Lower leg skin (tissue), 4 donors: ENCODE measurements at regions of chr1 and their contacts with region 1.

Region 1: GRCh38 chr1:84573967-84574842 is at the start of gene CTBS:
- DNase-seq: peak; percentile 72 to 96
- H3K4me3 ChIP-seq: peak within 1 kb of the TSS; percentile 77
- CTCF ChIP-seq: no peak
- POLR2A ChIP-seq: no peak
- total RNA-seq, gene CTBS: 15.1 to 16.9 (median 15.5) TPM

Region 2: GRCh38 chr1:82934074-82934473 is 1640.1 kb before region 1 on chr1:
- intact Hi-C with region 1: no loop called
- DNase-seq: no peak
- H3K4me3 ChIP-seq: no peak overlapping the region
- CTCF ChIP-seq: no peak
- POLR2A ChIP-seq: no peak

Region 3: GRCh38 chr1:84344286-84344685 is 229.9 kb before region 1 on chr1:
- intact Hi-C with region 1: no loop called
- DNase-seq: no peak
- H3K4me3 ChIP-seq: no peak overlapping the region
- CTCF ChIP-seq: no peak
- POLR2A ChIP-seq: no peak

Region 4: DNA sequence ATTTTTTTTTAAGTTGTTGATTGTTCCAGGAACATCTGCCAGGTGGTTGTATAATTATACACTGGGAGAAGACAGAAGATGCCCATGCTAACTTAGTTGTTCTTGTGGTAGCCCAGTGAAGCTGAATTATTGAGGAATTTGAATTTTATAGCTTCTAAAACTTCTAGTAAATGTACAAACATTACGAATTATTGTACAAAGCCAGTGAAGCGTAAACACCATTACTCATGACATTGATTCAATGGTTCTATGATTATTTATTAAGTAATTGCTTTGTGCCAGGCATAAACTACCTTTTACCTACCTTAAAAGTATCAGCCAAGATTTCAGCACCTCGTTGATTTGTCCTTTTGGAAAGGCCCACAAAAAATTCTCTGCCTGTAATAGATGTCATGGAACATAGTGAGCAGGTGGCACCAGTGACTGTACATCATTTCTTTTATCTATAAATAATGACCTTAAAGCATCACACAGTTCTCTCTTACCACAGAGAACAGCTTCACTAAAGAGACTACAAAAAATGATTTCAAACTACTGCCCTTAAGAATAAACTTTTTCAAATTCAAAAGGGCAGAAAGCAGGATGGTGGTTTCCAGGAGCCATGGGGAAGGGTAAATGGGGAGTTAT is 777.1 kb after region 1 on chr1:
- intact Hi-C with region 1: loop called (anchors 5 kb)
- DNase-seq: no peak
- H3K4me3 ChIP-seq: no peak overlapping the region
- CTCF ChIP-seq: no peak
- POLR2A ChIP-seq: no peak